MCF 10A (cell line): ENCODE measurements at regions of chr1 and their contacts with region 1.

Region 1: GRCh38 chr1:235504496-235505222 is 407 bp upstream of the B3GALNT2 start:
- DNase-seq: peak; percentile 100
- H3K4me3 Mint-ChIP-seq: peak overlapping the region; percentile 97
- H3K27ac Mint-ChIP-seq: peak overlapping the region; percentile 98
- H3K4me1 Mint-ChIP-seq: peaks cover 31% of the 10 kb centered on the region
- H3K27me3 Mint-ChIP-seq: no peaks in the 10 kb centered on the region
- CTCF ChIP-seq: peak; percentile 99

Region 2: GRCh38 chr1:235128456-235129328 is 376.0 kb before region 1 on chr1 and contains the start of gene TOMM20:
- CTCF ChIA-PET with region 1: no interaction called
- POLR2A ChIA-PET with region 1: interaction called, 24 read pairs
- intact Hi-C with region 1: no loop called
- DNase-seq: peak; percentile 100
- H3K4me3 Mint-ChIP-seq: peak within 1 kb of the TSS; percentile 100
- H3K27ac Mint-ChIP-seq: peak within 1 kb of the TSS; percentile 99
- H3K4me1 Mint-ChIP-seq: peaks cover 23% of the 10 kb centered on the region
- H3K27me3 Mint-ChIP-seq: no peaks in the 10 kb centered on the region
- CTCF ChIP-seq: no peak
- total RNA-seq, gene TOMM20: 309 and 339 TPM in 2 replicates

Region 3: GRCh38 chr1:235328357-235329138 is 176.1 kb before region 1 on chr1 and contains the start of gene GGPS1:
- CTCF ChIA-PET with region 1: no interaction called
- POLR2A ChIA-PET with region 1: interaction called, 68 read pairs
- intact Hi-C with region 1: loop called (anchors 2 kb)
- DNase-seq: peak; percentile 100
- H3K4me3 Mint-ChIP-seq: no peak within 1 kb of the TSS
- H3K27ac Mint-ChIP-seq: no peak within 1 kb of the TSS
- H3K4me1 Mint-ChIP-seq: peaks cover 23% of the 10 kb centered on the region
- H3K27me3 Mint-ChIP-seq: no peaks in the 10 kb centered on the region
- CTCF ChIP-seq: peak; percentile 6
- total RNA-seq, gene GGPS1: 56.5 and 74.8 TPM in 2 replicates

Region 4: DNA sequence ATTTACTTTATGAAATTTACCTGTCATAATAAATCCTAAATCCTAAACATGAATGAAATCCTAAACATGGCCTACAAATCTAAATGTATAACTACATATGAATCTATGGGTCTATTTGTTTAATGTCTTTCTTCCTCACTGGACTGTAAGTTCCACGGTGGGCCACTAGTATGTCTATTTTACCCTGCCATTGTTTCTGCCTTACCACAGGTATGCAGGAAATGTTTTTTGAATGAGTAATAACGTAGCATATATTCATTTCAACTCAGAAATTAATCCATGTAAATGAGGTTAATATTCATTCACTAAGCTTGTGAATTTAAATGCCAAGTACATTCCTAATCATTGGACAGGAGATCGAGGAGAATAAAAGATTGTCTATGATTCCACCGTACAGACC is 35.7 kb before region 1 on chr1:
- CTCF ChIA-PET with region 1: interaction called, 6 read pairs
- POLR2A ChIA-PET with region 1: interaction called, 27 read pairs
- intact Hi-C with region 1: no loop called
- DNase-seq: peak; percentile 80
- H3K4me3 Mint-ChIP-seq: no peak overlapping the region
- H3K27ac Mint-ChIP-seq: peak overlapping the region; percentile 61
- H3K4me1 Mint-ChIP-seq: peaks cover 6% of the 10 kb centered on the region
- H3K27me3 Mint-ChIP-seq: no peaks in the 10 kb centered on the region
- CTCF ChIP-seq: no peak

Region 5: DNA sequence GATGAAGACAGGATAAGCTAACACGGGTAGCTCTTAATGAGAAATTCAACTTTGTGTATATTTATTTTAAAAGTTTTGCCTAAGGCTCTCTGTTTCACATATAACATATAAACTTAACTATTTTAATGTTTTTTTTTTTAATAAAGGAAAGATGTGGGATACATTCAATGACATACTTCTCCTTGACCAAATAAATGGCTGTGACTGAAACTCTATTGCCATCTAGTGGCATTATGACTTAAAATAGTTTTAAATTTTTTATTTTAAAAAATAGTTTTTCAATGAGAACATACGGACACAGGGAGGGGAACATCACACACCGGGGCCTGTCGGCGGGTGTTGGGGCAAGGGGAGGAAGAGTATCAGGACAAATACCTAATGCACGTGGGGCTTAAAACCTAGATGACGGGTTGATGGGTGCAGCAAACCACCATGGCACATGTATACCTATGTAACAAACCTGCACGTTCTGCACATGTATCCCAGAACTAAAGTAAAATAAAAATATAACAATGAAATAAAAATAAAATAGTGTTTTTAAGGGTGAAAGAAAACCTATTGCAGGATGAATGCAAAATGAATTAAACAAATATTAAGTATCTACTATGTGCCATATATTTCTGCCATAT is 278.6 kb after region 1 on chr1:
- CTCF ChIA-PET with region 1: interaction called, 25 read pairs
- POLR2A ChIA-PET with region 1: interaction called, 24 read pairs
- intact Hi-C with region 1: loop called (anchors 2 kb)
- DNase-seq: peak; percentile 73
- H3K4me3 Mint-ChIP-seq: no peak overlapping the region
- H3K27ac Mint-ChIP-seq: no peak overlapping the region
- H3K4me1 Mint-ChIP-seq: peaks cover 10% of the 10 kb centered on the region
- H3K27me3 Mint-ChIP-seq: no peaks in the 10 kb centered on the region
- CTCF ChIP-seq: peak; percentile 72

Region 6: DNA sequence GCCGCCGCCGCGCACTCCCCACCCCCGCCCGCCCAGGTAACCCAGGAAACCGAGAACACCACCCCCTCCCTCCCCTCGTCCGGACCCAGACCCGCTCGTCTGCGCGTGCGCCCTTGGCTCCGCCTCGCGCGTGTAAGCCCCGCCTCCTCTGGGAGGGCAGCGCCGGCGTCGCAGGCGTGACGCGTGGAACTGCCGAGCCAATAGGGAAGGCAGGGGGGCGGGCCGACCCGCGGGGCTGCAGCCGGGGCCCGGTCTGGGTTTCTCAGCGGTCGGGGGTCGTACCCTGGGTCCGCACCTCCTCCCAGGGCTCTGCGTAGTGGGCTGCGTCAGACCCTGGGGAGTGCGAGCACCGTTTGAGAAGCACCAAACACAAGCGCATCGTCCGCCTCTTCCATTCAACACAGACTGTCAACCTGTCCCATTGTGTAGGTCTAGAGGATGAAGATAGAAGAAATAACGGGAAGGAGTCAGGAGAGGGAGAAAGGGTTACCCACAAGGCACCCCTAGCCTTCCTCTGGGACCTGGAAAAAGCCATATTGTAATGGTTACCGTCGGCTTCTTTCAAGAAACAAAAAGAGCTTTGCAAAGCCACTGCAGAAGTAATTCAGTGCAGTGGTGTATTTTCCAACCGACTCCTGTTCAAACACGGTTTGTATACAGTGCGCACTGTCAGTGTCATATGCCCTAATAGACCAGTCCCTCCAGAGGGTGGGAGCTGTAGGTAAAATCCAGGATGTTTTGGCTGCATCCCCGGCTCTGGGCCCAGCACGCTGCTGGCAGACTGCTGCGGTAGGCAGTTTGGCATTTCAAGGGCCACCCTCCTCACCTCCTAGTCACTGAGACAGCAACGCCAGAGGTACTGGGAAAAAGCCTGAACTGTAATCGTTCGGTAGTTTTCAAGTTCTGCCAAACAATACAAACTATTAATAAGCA is 362.5 kb after region 1 on chr1:
- CTCF ChIA-PET with region 1: interaction called, 6 read pairs
- POLR2A ChIA-PET with region 1: interaction called, 16 read pairs
- intact Hi-C with region 1: no loop called
- DNase-seq: peak; percentile 99
- H3K4me3 Mint-ChIP-seq: peak overlapping the region; percentile 99
- H3K27ac Mint-ChIP-seq: peak overlapping the region; percentile 95
- H3K4me1 Mint-ChIP-seq: peaks cover 35% of the 10 kb centered on the region
- H3K27me3 Mint-ChIP-seq: no peaks in the 10 kb centered on the region
- CTCF ChIP-seq: no peak

Region 7: GRCh38 chr1:235933017-235933765 is 428.5 kb after region 1 on chr1:
- CTCF ChIA-PET with region 1: no interaction called
- POLR2A ChIA-PET with region 1: interaction called, 15 read pairs
- intact Hi-C with region 1: no loop called
- DNase-seq: peak; percentile 67
- H3K4me3 Mint-ChIP-seq: peak overlapping the region; percentile 18
- H3K27ac Mint-ChIP-seq: peak overlapping the region; percentile 52
- H3K4me1 Mint-ChIP-seq: peaks cover 51% of the 10 kb centered on the region
- H3K27me3 Mint-ChIP-seq: no peaks in the 10 kb centered on the region
- CTCF ChIP-seq: no peak